CD8-positive, alpha-beta T cell (primary cell): ENCODE measurements at regions of chr3 and their contacts with region 1.

Region 1: DNA sequence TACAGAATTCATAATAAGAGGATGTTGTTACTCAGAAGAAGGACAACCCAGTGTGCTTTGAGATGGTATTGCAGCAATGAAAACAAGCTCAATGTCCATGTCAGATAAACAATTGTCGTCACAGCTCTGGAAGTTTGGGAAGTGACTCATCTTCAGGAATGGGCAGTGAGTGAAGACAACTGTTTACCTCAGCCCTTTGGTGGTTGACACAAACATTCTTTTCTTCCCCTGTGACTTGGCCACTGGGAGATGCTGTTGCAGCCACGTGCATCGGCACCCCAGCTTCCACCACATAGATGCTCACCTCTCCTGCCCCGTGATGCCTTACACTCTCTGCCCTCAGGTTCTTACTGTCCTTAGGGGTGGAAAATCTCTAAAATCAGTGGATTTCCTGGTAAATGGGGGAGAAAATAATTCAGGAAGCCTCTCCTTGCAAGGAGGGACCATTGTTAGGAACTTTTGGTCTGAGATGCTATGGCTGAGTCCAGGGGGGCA is 114.1 kb upstream of the GALNT15 start:
- DNase-seq: no peak
- ATAC-seq: no peak
- H3K4me3 ChIP-seq: no peak overlapping the region
- H3K4me3 Mint-ChIP-seq: no peak overlapping the region
- H3K27ac ChIP-seq: no peak overlapping the region
- H3K27ac Mint-ChIP-seq: no peak overlapping the region
- H3K4me1 ChIP-seq: no peaks in the 10 kb centered on the region
- H3K4me1 Mint-ChIP-seq: no peaks in the 10 kb centered on the region
- H3K27me3 ChIP-seq: no peaks in the 10 kb centered on the region
- H3K27me3 Mint-ChIP-seq: peaks cover 8% of the 10 kb centered on the region
- CTCF ChIP-seq: no peak

Region 2: DNA sequence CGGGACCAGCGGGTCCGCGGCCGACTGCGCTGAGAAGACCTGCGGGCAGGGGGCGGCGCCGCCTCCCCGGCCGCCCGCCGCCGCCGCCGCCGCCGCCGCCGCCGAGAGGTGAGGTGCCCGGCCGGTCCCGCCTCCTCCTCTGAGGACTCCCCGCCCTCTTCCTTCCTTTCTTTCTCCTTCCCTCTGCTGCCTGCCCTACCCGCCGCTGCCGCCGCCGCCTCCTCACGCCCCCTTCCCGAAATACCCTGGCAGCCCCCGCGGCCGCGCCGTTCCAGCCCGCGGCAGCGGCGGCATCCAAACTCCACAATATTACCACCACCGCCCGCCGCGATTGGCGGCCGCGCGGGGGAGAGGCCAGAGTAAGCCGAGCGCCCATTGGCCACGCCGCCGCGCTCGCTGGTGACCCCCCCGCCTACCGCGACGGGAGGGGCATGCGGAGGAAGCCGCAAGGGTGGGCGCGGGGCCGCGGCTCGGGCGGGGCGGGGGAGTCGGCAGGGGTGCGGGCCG is 200.8 kb before region 1 on chr3:
- CTCF ChIA-PET with region 1: no interaction called
- POLR2A ChIA-PET with region 1: no interaction called
- intact Hi-C with region 1: no loop called
- DNase-seq: peak; percentile 42 to 88 (median 73)
- ATAC-seq: peak; percentile 78
- H3K4me3 ChIP-seq: peak overlapping the region; percentile 73 to 86
- H3K4me3 Mint-ChIP-seq: peak overlapping the region; percentile 97
- H3K27ac ChIP-seq: peak overlapping the region in 1 of 2 experiments; percentile 46
- H3K27ac Mint-ChIP-seq: peak overlapping the region; percentile 95
- H3K4me1 ChIP-seq: peaks cover 20% of the 10 kb centered on the region
- H3K4me1 Mint-ChIP-seq: peaks cover 35% of the 10 kb centered on the region
- H3K27me3 ChIP-seq: no peaks in the 10 kb centered on the region
- H3K27me3 Mint-ChIP-seq: no peaks in the 10 kb centered on the region
- CTCF ChIP-seq: no peak

Region 3: DNA sequence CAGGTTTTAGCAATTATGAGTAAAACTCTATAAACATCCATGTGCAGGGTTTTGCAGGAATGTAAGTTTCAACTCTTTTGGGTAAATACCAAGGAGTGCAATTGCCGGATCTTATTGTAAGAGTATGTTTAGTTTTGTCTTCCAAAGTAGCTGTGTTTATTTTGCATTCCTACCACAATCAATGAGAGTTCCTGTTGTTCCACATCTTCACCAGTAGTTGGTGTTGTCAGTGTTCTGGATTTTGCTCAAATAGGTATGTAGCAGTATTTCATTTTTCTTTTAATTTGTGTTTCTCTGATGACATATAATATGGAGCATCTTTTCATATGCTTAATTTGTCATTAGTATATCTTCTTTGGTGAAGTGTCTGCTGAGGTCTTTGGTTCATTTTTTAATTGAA is 71.0 kb before region 1 on chr3:
- CTCF ChIA-PET with region 1: no interaction called
- POLR2A ChIA-PET with region 1: no interaction called
- intact Hi-C with region 1: no loop called
- DNase-seq: no peak
- ATAC-seq: no peak
- H3K4me3 ChIP-seq: no peak overlapping the region
- H3K4me3 Mint-ChIP-seq: no peak overlapping the region
- H3K27ac ChIP-seq: no peak overlapping the region
- H3K27ac Mint-ChIP-seq: no peak overlapping the region
- H3K4me1 ChIP-seq: no peaks in the 10 kb centered on the region
- H3K4me1 Mint-ChIP-seq: no peaks in the 10 kb centered on the region
- H3K27me3 ChIP-seq: no peaks in the 10 kb centered on the region
- H3K27me3 Mint-ChIP-seq: peaks cover 2% of the 10 kb centered on the region
- CTCF ChIP-seq: no peak

Region 4: GRCh38 chr3:16071239-16071638 is 10.8 kb after region 1 on chr3:
- CTCF ChIA-PET with region 1: no interaction called
- POLR2A ChIA-PET with region 1: no interaction called
- intact Hi-C with region 1: no loop called
- DNase-seq: no peak
- ATAC-seq: no peak
- H3K4me3 ChIP-seq: no peak overlapping the region
- H3K4me3 Mint-ChIP-seq: no peak overlapping the region
- H3K27ac ChIP-seq: no peak overlapping the region
- H3K27ac Mint-ChIP-seq: no peak overlapping the region
- H3K4me1 ChIP-seq: no peaks in the 10 kb centered on the region
- H3K4me1 Mint-ChIP-seq: no peaks in the 10 kb centered on the region
- H3K27me3 ChIP-seq: no peaks in the 10 kb centered on the region
- H3K27me3 Mint-ChIP-seq: no peaks in the 10 kb centered on the region
- CTCF ChIP-seq: no peak

Region 5: DNA sequence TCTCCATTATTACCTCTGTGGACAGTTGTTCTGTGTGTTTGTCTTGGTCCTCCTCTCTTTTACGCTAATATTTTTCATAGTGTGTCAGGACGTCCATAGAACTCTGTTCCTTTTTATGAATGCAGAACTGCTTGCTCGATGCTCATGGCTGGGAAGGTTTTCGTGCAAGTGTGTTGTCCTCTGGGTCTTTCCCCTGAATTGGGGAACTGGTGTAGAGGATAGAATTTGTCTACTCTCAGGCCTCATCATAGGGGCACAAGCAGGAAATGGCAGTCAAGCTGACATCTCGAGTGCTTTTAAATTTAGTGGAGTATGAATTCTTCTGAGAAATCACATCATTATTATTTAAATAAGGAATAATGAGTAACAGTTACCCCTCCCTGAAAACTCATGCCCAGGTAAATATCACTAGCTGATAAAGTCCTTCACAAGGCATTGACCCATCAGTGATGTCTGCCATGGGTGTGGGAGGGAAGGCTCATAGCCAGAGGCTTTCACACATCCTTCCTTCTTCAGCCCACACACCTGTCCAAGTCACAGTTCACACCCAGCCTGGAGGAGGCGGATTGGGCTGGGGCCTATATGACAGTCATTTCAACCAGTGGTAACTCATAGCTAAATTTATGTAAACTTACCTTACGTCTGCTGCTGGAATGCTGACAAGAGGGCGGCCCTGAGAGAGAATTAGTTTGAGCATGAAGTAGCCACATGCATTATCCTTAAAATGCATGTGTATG is 1050.4 kb after region 1 on chr3:
- CTCF ChIA-PET with region 1: no interaction called
- POLR2A ChIA-PET with region 1: no interaction called
- intact Hi-C with region 1: no loop called
- DNase-seq: no peak
- ATAC-seq: no peak
- H3K4me3 ChIP-seq: no peak overlapping the region
- H3K4me3 Mint-ChIP-seq: no peak overlapping the region
- H3K27ac ChIP-seq: no peak overlapping the region
- H3K27ac Mint-ChIP-seq: no peak overlapping the region
- H3K4me1 ChIP-seq: no peaks in the 10 kb centered on the region
- H3K4me1 Mint-ChIP-seq: peaks cover 2% of the 10 kb centered on the region
- H3K27me3 ChIP-seq: no peaks in the 10 kb centered on the region
- H3K27me3 Mint-ChIP-seq: no peaks in the 10 kb centered on the region
- CTCF ChIP-seq: no peak

Region 6: DNA sequence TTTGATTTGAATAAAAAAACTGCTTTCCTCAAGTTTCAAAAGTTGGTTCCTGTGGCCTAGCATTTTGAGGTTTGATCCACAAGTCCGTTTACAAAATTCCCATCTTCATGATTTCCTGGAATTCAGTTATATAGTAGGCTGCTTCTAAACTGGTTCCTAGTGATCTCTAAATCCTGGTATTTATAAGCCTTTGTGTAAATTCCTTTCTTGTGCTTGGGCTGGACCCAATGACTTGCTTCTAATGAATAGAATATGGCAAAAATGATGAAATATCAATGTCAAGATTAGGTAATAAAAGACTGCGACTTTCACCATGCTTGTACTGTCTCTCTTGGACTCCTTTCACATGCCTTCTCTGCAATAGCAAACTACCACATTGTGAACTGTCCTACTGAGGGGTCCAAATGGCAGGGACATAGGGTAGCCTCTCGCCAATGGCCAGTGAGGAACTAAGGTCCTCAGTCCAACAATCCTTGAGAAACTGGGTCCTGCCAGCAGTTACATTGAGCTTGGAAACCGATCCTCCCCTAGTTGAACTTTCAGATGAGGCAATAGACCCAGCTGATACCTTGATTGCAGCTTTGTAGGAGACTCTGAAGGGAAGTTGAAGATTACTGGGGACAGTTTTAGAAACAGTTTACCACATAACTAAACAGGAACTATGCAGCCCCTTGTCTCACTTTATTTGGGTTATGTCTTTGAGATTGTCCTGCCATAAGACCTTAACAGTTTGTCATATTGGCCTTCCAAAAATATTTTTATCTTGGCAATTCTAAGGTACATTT is 1985.9 kb after region 1 on chr3:
- CTCF ChIA-PET with region 1: no interaction called
- POLR2A ChIA-PET with region 1: no interaction called
- intact Hi-C with region 1: loop called in 1 of 2 experiments (anchors 5 kb)
- DNase-seq: no peak
- ATAC-seq: no peak
- H3K4me3 ChIP-seq: no peak overlapping the region
- H3K4me3 Mint-ChIP-seq: no peak overlapping the region
- H3K27ac ChIP-seq: no peak overlapping the region
- H3K27ac Mint-ChIP-seq: no peak overlapping the region
- H3K4me1 ChIP-seq: no peaks in the 10 kb centered on the region
- H3K4me1 Mint-ChIP-seq: no peaks in the 10 kb centered on the region
- H3K27me3 ChIP-seq: no peaks in the 10 kb centered on the region
- H3K27me3 Mint-ChIP-seq: peaks cover 3% of the 10 kb centered on the region
- CTCF ChIP-seq: no peak